ENCODE measurements at regions of chr3 and their contacts with region 1.

Region 1: GRCh38 chr3:31213869-31214486 is 318.7 kb upstream of the STT3B start:
- DNase-seq: peak; percentile 81
- ATAC-seq: peak; percentile 85
- H3K4me3 Mint-ChIP-seq: peak overlapping the region; percentile 49
- H3K27ac Mint-ChIP-seq: peak overlapping the region; percentile 81
- H3K4me1 Mint-ChIP-seq: peaks cover 74% of the 10 kb centered on the region
- H3K27me3 Mint-ChIP-seq: no peaks in the 10 kb centered on the region

Region 2: GRCh38 chr3:31227131-31227562 is 13.2 kb after region 1 on chr3:
- CTCF ChIA-PET with region 1: interaction called, 12 read pairs
- POLR2A ChIA-PET with region 1: interaction called, 12 read pairs
- DNase-seq: no peak
- ATAC-seq: peak; percentile 54
- H3K4me3 Mint-ChIP-seq: peak overlapping the region; percentile 12
- H3K27ac Mint-ChIP-seq: peak overlapping the region; percentile 85
- H3K4me1 Mint-ChIP-seq: peaks cover 82% of the 10 kb centered on the region
- H3K27me3 Mint-ChIP-seq: no peaks in the 10 kb centered on the region

Region 3: DNA sequence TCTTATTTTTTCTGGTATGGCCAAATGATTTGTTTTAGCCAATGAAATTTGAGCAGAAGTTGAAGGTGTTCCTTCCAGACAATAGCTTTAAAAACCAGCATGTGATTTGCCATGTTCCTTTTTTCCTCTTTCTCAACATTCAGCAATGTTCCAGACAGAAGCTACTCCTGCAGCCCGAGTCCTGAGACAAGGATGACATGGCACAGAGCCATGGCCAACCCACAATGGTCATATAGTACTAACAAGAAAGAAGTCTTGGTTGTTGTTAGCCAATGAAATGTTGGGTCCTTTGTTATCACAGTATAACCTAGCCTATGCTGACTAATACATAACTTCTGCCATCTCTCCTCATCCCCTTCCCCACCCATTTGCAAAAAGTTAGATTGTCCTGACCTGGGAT is 107.6 kb after region 1 on chr3:
- CTCF ChIA-PET with region 1: no interaction called
- POLR2A ChIA-PET with region 1: no interaction called
- DNase-seq: no peak
- ATAC-seq: no peak
- H3K4me3 Mint-ChIP-seq: no peak overlapping the region
- H3K27ac Mint-ChIP-seq: no peak overlapping the region
- H3K4me1 Mint-ChIP-seq: no peaks in the 10 kb centered on the region
- H3K27me3 Mint-ChIP-seq: peaks cover 2% of the 10 kb centered on the region

Measured in activated CD8-positive, alpha-beta T cell treated with anti-CD3 and anti-CD28 coated beads, Interleukin-2, amount 10 ng/mL, durations not matched to agents 7 days and 5 days (primary cell).